Transverse colon (tissue), 4 donors: ENCODE measurements at regions of chr18 and their contacts with region 1.

Region 1: DNA sequence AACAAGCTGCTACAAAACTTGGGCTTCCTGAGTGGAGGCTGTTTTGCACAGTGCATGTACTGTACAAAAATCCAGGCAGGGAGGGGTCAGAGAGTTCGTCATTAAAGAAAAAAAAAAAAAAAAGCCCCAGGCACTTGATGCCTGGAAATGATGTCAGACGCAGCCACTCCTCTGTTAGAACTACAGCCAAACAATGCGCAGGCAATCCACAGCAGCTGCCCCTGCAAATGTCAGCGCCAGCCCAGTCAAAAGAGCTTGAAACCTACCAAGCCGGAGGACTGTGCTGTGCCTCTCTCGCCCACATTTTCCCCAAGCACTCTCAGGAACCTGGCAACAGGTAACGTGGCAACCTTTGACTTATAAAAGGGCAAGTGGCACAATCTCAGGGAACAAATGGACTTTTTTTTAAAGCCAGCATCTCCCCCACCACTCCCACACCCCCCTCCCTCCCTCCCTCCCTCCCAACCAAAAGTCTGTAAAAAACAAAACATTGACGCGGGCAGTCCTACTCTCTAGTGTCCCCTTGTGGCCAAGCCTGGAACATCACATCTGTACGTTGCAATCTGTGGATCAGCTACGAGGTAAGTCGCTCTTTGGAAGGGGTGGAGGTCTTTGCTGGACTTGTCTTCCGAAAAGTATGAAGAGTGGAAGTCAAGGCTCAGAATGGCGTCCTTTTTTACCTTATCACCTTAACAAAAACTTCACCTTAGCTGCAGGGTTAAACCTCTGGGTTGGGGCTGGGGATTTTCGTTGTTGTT is 144.1 kb downstream of the TGIF1 start:
- DNase-seq: peak; percentile 92
- H3K4me3 ChIP-seq: peak overlapping the region; percentile 20 to 45 (median 37)
- H3K27ac ChIP-seq: peak overlapping the region; percentile 96 to 99 (median 98)
- H3K4me1 ChIP-seq: peaks cover 22 to 47% (median 42%) of the 10 kb centered on the region in 4 donors
- H3K27me3 ChIP-seq: no peaks in the 10 kb centered on the region
- CTCF ChIP-seq: peak; percentile 91 to 96 (median 95)
- EP300 ChIP-seq: peak; percentile 59
- POLR2A ChIP-seq: peak; percentile 80

Region 2: DNA sequence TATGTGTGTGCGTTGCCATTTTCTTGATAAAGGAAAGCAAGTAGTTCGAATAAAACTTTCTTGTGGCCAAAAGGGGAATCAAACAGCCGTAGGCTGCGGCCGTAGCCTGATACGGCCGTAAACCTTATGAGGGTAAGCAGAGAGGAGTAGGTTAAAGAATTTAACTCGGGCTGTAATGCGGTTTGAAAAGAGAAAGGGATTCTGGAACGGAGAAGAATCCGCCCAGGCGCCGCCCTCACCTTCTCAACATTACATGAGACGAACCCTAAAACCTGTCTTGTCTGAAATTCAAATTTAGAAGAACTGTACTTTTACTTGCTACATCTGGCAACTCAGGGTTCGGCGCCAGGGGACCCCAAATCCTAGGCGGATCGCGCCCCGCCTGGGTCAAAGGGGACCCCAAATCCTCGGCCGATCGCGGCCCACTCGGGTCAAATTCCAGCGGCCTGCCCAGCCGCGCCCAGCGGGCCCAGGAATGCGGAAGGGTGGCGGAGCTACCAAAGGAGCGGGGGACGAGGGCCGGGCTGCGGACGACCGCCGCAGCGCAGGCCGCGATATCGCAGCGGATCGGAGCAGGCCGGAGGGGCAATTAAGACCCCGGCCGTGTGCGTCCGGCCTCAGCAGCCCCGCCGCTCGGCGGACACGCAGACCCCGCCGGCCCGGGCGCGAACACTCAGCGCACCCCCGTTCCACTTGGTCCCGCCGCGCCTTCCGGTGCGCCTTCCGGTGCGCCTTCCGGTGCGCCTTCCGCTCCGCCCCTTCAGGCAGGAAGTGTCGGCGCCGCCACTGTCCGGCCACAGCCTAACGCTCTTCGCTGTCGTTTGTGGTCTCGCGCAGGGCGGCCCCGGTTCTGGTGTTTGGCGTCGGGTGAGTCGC is 332.5 kb before region 1 on chr18 and contains the start of gene MYL12B:
- in situ Hi-C with region 1: no loop called
- intact Hi-C with region 1: loop called (anchors 5 kb)
- DNase-seq: peak; percentile 89
- H3K4me3 ChIP-seq: peak within 1 kb of the TSS; percentile 84 to 96 (median 91)
- H3K27ac ChIP-seq: peak within 1 kb of the TSS; percentile 92 to 99 (median 97)
- H3K4me1 ChIP-seq: peaks cover 27 to 61% (median 47%) of the 10 kb centered on the region in 4 donors
- H3K27me3 ChIP-seq: no peaks in the 10 kb centered on the region
- CTCF ChIP-seq: peak in 2 of 5 experiments; percentile 22 to 28
- EP300 ChIP-seq: no peak
- POLR2A ChIP-seq: peak; percentile 88
- total RNA-seq, gene MYL12B: 78.2 to 558 (median 337) TPM

Region 3: GRCh38 chr18:3547891-3548615 is 46.0 kb before region 1 on chr18:
- in situ Hi-C with region 1: no loop called
- intact Hi-C with region 1: no loop called
- DNase-seq: no peak
- H3K4me3 ChIP-seq: no peak overlapping the region
- H3K27ac ChIP-seq: no peak overlapping the region
- H3K4me1 ChIP-seq: peaks cover 0 to 7% (median 0%) of the 10 kb centered on the region in 4 donors
- H3K27me3 ChIP-seq: no peaks in the 10 kb centered on the region
- CTCF ChIP-seq: no peak
- EP300 ChIP-seq: no peak
- POLR2A ChIP-seq: no peak

Region 4: GRCh38 chr18:3665780-3666525 is 71.9 kb after region 1 on chr18:
- in situ Hi-C with region 1: loop called in 2 of 4 experiments (anchors 10 kb)
- intact Hi-C with region 1: no loop called
- DNase-seq: peak; percentile 88
- H3K4me3 ChIP-seq: peak overlapping the region in 3 of 4 donors; percentile 5 to 33 (median 11)
- H3K27ac ChIP-seq: peak overlapping the region; percentile 78 to 84 (median 82)
- H3K4me1 ChIP-seq: peaks cover 0 to 27% (median 11%) of the 10 kb centered on the region in 4 donors
- H3K27me3 ChIP-seq: no peaks in the 10 kb centered on the region
- CTCF ChIP-seq: peak; percentile 91 to 98 (median 92)
- EP300 ChIP-seq: no peak
- POLR2A ChIP-seq: no peak